ENCODE measurements at regions of chr9 and their contacts with region 1.

Region 1: DNA sequence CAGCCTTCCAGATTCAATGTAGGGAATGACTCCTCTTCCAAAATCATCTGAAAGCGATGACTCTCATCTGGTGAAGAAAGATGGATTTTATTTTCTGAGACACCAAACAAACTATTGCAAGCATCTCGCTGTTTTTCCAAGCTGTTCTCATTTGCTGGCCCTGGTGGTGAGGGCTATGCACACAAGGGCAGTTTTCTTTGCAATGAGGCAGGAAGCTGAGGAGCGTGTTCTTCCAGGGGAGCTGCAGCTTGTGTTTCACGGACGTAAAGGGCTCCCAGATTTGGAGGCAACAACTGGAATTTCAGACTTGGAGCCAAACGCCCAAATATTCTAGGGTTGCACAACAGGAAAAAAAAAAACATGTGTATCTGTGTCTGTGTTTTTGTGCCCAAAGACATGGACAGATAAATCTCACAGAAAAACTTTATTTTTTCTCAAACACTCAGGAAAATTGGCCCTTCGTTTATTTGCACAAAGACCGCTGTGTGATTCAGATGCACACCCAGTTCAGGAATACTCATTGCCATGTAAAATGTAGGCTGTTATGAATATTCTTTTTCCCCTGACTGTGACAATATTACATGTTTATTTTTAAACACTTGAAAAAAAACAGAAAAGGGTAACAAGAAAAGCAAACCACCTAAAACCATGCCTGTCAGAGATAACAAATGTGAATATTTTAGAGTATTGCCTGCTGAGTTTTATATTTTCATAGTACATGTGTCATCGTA is 151.3 kb downstream of the GAS1 start:
- DNase-seq: peak in 1 of 2 donors; percentile 72
- H3K4me3 ChIP-seq: no peak overlapping the region
- H3K27ac ChIP-seq: no peak overlapping the region
- H3K4me1 ChIP-seq: peaks cover 0 to 5% of the 10 kb centered on the region in 2 donors
- H3K27me3 ChIP-seq: no peaks in the 10 kb centered on the region
- CTCF ChIP-seq: no peak

Region 2: GRCh38 chr9:86732514-86733171 is 63.3 kb before region 1 on chr9:
- intact Hi-C with region 1: no loop called
- DNase-seq: peak in 1 of 2 donors; percentile 74
- H3K4me3 ChIP-seq: no peak overlapping the region
- H3K27ac ChIP-seq: peak overlapping the region; percentile 30 to 60
- H3K4me1 ChIP-seq: peaks cover 0 to 5% of the 10 kb centered on the region in 2 donors
- H3K27me3 ChIP-seq: no peaks in the 10 kb centered on the region
- CTCF ChIP-seq: no peak

Region 3: GRCh38 chr9:86983260-86984255 is 187.6 kb after region 1 on chr9:
- intact Hi-C with region 1: loop called (anchors 10 kb)
- DNase-seq: peak in 1 of 2 donors; percentile 72
- H3K4me3 ChIP-seq: peak overlapping the region in 1 of 2 donors; percentile 23
- H3K27ac ChIP-seq: peak overlapping the region in 1 of 2 donors; percentile 2
- H3K4me1 ChIP-seq: peaks cover 0 to 6% of the 10 kb centered on the region in 2 donors
- H3K27me3 ChIP-seq: no peaks in the 10 kb centered on the region
- CTCF ChIP-seq: no peak

Measured in ascending aorta (tissue), 2 donors.